Endothelial cell of umbilical vein (primary cell): ENCODE measurements at regions of chr9 and their contacts with region 1.

Region 1: GRCh38 chr9:91036826-91037510 is 235.3 kb downstream of the SYK start:
- DNase-seq: peak; percentile 94
- H3K4me3 ChIP-seq: no peak overlapping the region
- H3K27ac ChIP-seq: peak overlapping the region; percentile 89
- H3K4me1 ChIP-seq: peaks cover 17% of the 10 kb centered on the region
- H3K27me3 ChIP-seq: no peaks in the 10 kb centered on the region
- CTCF ChIP-seq: peak; percentile 78 to 83
- POLR2A ChIP-seq: no peak

Region 2: GRCh38 chr9:91089405-91090129 is 52.6 kb after region 1 on chr9:
- CTCF ChIA-PET with region 1: interaction called, 17 read pairs
- POLR2A ChIA-PET with region 1: no interaction called
- dilution Hi-C with region 1: no loop called
- intact Hi-C with region 1: loop called (anchors 5 kb)
- DNase-seq: peak; percentile 41
- H3K4me3 ChIP-seq: no peak overlapping the region
- H3K27ac ChIP-seq: no peak overlapping the region
- H3K4me1 ChIP-seq: no peaks in the 10 kb centered on the region
- H3K27me3 ChIP-seq: peaks cover 0 to 5% of the 10 kb centered on the region in 2 experiments
- CTCF ChIP-seq: peak in 1 of 2 donors; percentile 42
- POLR2A ChIP-seq: no peak

Region 3: DNA sequence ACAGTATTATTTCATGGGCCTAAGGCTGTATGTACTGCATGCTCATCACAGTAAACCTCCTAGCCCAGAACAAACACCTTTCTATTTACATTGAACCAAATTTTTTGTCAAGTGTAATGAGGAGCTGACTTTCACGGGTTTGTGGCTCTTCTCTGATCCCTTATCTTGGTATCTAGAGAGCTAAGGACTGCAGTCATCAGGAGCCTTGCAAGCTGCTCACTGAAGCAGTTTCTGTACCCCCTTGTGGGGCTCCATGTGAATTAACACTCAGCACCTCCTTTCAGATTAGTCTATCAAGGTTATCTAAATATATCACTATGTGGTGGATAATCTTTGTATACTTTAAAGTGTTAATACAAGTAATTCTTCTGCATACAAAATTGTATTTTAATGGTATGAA is 216.5 kb after region 1 on chr9:
- CTCF ChIA-PET with region 1: interaction called, 3 read pairs
- POLR2A ChIA-PET with region 1: no interaction called
- dilution Hi-C with region 1: no loop called
- intact Hi-C with region 1: loop called (anchors 1 kb)
- DNase-seq: no peak
- H3K4me3 ChIP-seq: no peak overlapping the region
- H3K27ac ChIP-seq: no peak overlapping the region
- H3K4me1 ChIP-seq: no peaks in the 10 kb centered on the region
- H3K27me3 ChIP-seq: no peaks in the 10 kb centered on the region
- CTCF ChIP-seq: no peak
- POLR2A ChIP-seq: no peak

Region 4: DNA sequence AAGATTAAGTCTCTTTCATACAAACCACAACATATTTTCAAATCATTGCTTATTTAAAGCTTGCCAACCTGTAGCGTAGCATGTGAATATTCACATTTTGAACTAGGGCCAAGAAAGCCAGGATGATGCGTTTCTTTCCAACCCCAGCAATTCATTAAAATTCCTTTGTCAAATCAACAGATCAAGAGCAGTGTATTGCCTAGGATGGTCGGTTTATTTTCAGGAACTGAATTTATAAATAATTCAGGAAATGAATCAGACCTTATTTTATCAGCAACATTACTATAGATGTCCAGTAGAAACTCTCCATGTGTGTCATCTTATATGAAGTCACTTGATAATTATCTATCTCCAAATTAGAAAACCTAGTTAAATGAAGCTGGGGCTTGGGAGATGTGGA is 338.0 kb after region 1 on chr9:
- CTCF ChIA-PET with region 1: no interaction called
- POLR2A ChIA-PET with region 1: no interaction called
- dilution Hi-C with region 1: no loop called
- intact Hi-C with region 1: loop called (anchors 1 kb)
- DNase-seq: peak; percentile 60
- H3K4me3 ChIP-seq: no peak overlapping the region
- H3K27ac ChIP-seq: no peak overlapping the region
- H3K4me1 ChIP-seq: peaks cover 20% of the 10 kb centered on the region
- H3K27me3 ChIP-seq: no peaks in the 10 kb centered on the region
- CTCF ChIP-seq: no peak
- POLR2A ChIP-seq: no peak

Region 5: DNA sequence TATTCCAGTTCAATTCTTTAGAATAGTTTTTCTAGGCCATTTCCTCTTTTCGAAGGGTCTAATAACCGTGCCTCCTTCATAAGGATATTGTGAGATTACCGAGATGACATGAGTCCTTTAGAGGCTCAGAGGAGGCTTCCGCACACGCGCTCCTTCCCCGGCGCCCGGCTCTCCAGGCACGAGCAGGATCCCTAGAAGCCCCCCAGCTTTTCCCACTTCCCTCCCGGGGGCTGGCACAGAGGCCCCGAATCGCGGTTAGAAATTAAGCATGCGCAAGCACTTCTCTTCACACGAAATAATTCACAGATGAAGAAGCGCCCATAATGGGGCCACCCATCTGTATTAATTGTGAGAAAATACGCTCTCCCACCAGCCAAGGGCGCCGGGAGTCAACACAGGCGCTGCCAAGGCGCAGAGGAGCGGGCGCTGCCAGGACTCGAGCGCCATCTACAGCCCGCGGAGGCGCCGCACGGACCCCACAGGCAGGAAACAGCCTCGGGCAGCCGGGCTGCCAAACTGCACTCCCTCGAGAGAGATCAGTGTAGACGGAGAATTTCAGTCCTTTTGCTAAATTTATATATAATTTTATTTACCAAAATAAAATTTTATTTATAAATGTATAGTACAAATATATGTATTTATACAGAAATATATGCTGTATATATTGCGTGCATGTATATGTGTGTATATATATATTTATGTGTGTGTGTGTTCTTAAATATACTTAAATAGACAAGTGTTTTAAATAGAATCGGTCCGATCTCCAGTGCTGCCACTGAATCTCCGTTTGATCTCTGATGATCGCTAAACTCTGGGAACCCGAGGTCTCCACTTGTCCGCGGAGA is 644.7 kb after region 1 on chr9:
- CTCF ChIA-PET with region 1: interaction called, 3 read pairs
- POLR2A ChIA-PET with region 1: no interaction called
- dilution Hi-C with region 1: no loop called
- intact Hi-C with region 1: loop called (anchors 1 kb)
- DNase-seq: peak; percentile 48
- H3K4me3 ChIP-seq: no peak overlapping the region
- H3K27ac ChIP-seq: no peak overlapping the region
- H3K4me1 ChIP-seq: no peaks in the 10 kb centered on the region
- H3K27me3 ChIP-seq: peaks cover 0 to 2% of the 10 kb centered on the region in 2 experiments
- CTCF ChIP-seq: peak; percentile 84 to 96
- POLR2A ChIP-seq: no peak